Calu3 (cell line): ENCODE measurements at regions of chr17 and their contacts with region 1.

Region 1: DNA sequence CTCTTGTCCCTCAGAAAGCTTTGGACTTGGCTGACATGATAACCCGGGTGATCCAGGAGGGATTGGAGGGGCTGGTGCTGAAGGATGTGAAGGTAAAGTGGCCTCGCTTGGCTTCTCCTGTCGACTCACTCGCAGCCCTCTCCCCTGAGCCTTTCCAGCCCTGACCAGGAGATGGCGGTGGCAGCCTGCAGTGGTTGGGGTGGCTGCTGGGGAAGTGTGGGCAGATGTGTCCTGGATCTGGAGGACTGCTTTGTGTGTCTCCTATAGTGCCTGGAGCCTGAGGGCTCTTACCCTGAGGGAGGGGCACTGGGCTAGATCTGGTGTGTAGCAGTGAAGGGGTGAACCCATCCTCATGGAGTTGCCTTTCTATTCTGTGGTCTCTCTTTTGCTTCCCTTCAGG is 17.9 kb downstream of the LIG3 start:
- DNase-seq: peak; percentile 82
- H3K4me3 Mint-ChIP-seq: no peak overlapping the region
- H3K27ac Mint-ChIP-seq: no peak overlapping the region
- H3K4me1 Mint-ChIP-seq: no peaks in the 10 kb centered on the region
- H3K27me3 Mint-ChIP-seq: no peaks in the 10 kb centered on the region
- CTCF ChIP-seq: peak; percentile 77

Region 2: DNA sequence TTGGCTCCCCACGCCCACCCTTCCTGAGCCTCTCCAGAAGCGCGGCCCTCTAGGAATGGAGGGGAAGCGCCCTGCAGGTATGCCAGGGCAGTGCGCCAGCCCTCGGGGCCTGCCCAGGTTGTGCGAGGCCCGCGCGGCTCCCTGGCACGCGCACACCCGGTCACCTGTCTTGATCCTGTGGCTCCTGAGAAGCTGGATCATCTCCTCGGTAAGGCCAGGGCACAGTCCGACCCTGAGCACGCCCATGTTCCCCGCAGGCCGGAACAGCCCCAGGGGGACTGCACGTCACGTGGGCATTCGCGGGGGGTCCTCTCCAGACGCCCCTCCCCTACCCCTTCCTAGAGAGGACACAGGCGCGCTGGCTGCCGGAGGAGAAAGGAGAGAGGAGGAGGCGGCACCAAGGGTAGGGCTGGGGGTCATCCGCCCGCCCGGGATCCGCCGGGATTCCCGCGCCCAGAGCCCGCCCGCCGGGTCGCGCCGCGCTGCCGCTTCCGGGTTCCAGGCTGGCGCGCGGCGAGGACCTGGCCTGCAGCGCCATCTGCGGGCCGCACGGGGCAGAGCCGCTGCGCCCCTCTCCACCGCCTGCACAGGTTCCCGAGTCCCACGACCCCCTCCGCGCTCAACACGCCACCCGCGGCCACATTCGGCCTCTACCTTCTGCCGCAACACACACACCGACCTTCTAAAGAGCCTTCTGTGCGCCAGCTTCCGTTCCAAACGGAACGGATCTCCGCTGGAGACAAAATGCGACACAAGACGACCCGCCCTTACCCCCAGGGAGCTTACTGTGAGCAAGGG is 121.4 kb after region 1 on chr17 and contains the start of gene RAD51D:
- CTCF ChIA-PET with region 1: no interaction called
- intact Hi-C with region 1: loop called (anchors 1 kb)
- DNase-seq: peak; percentile 83
- H3K4me3 Mint-ChIP-seq: peak within 1 kb of the TSS; percentile 75
- H3K27ac Mint-ChIP-seq: peak within 1 kb of the TSS; percentile 71
- H3K4me1 Mint-ChIP-seq: peaks cover 27% of the 10 kb centered on the region
- H3K27me3 Mint-ChIP-seq: no peaks in the 10 kb centered on the region
- CTCF ChIP-seq: peak; percentile 91
- total RNA-seq, gene RAD51D: 16.8 and 17.1 TPM in 2 replicates